ENCODE measurements at regions of chr7 and their contacts with region 1.

Region 1: GRCh38 chr7:32846701-32847100 is 44.9 kb downstream of the KBTBD2 start:
- DNase-seq: peak; percentile 83 to 86 (median 84)
- H3K4me3 ChIP-seq: no peak overlapping the region
- H3K4me3 Mint-ChIP-seq: peak overlapping the region in 4 of 8 donors; percentile 33 to 50 (median 44)
- H3K27ac ChIP-seq: no peak overlapping the region
- H3K27ac Mint-ChIP-seq: peak overlapping the region in 4 of 7 donors; percentile 1 to 65 (median 50)
- H3K4me1 ChIP-seq: no peaks in the 10 kb centered on the region
- H3K4me1 Mint-ChIP-seq: peaks cover 5 to 7% (median 6%) of the 10 kb centered on the region in 4 donors
- H3K27me3 ChIP-seq: no peaks in the 10 kb centered on the region
- H3K27me3 Mint-ChIP-seq: peaks cover 12 to 19% of the 10 kb centered on the region in 2 donors

Region 2: DNA sequence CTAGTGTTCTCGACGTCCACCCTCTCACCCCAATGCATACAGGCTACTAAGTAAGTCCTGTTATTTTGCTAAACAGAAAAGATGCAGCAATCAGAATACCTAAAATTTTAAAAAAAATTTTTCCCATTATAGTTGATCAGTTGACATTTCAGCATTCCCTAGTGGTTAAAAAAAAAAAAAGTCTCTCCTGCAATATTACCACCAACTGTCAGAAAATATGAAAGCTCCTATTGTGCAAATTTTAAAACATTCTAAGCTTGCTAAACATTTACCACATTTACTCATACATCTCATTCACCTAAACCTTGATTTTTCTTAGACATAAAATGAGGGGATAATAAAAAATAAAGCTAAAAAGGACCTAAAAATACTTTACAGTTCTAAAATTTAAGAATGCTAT is 185.8 kb before region 1 on chr7:
- CTCF ChIA-PET with region 1: no interaction called
- POLR2A ChIA-PET with region 1: no interaction called
- intact Hi-C with region 1: no loop called
- DNase-seq: no peak
- H3K4me3 ChIP-seq: no peak overlapping the region
- H3K4me3 Mint-ChIP-seq: no peak overlapping the region
- H3K27ac ChIP-seq: no peak overlapping the region
- H3K27ac Mint-ChIP-seq: no peak overlapping the region
- H3K4me1 ChIP-seq: no peaks in the 10 kb centered on the region
- H3K4me1 Mint-ChIP-seq: no peaks in the 10 kb centered on the region
- H3K27me3 ChIP-seq: no peaks in the 10 kb centered on the region
- H3K27me3 Mint-ChIP-seq: peaks cover 11 to 20% of the 10 kb centered on the region in 2 donors

Region 3: DNA sequence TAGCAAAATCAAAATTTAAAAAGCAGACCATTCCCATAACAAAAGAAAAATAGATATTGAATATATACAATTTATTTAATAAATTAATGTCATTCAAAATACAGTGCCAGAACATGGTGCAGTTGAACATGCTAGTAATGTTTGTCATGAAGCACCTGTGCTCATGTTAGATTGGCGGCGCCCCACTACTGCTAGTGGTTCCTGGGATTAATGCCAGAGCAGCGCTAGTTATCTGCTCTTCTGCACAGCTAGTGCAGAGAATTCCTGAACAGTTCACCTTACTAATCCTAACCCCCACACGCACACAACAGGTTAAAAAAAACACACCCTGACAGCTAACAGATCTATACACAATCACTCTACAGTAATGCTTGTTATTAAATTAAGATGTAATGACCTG is 21.4 kb after region 1 on chr7:
- CTCF ChIA-PET with region 1: interaction called, 25 read pairs
- POLR2A ChIA-PET with region 1: no interaction called
- intact Hi-C with region 1: no loop called
- DNase-seq: no peak
- H3K4me3 ChIP-seq: no peak overlapping the region
- H3K4me3 Mint-ChIP-seq: no peak overlapping the region
- H3K27ac ChIP-seq: no peak overlapping the region
- H3K27ac Mint-ChIP-seq: peak overlapping the region in 1 of 7 donors; percentile 7
- H3K4me1 ChIP-seq: peaks cover 5% of the 10 kb centered on the region
- H3K4me1 Mint-ChIP-seq: peaks cover 15 to 35% (median 17%) of the 10 kb centered on the region in 4 donors
- H3K27me3 ChIP-seq: no peaks in the 10 kb centered on the region
- H3K27me3 Mint-ChIP-seq: no peaks in the 10 kb centered on the region

Region 4: GRCh38 chr7:32905175-32905662 is 58.5 kb after region 1 on chr7:
- CTCF ChIA-PET with region 1: interaction called, 25 read pairs
- POLR2A ChIA-PET with region 1: interaction called, 3 read pairs
- intact Hi-C with region 1: no loop called
- DNase-seq: peak; percentile 81 to 90 (median 87)
- H3K4me3 ChIP-seq: peak overlapping the region in 1 of 2 donors; percentile 46
- H3K4me3 Mint-ChIP-seq: peak overlapping the region; percentile 82 to 91 (median 86)
- H3K27ac ChIP-seq: peak overlapping the region; percentile 44
- H3K27ac Mint-ChIP-seq: peak overlapping the region; percentile 94 to 99 (median 98)
- H3K4me1 ChIP-seq: peaks cover 21% of the 10 kb centered on the region
- H3K4me1 Mint-ChIP-seq: peaks cover 10 to 20% (median 15%) of the 10 kb centered on the region in 4 donors
- H3K27me3 ChIP-seq: no peaks in the 10 kb centered on the region
- H3K27me3 Mint-ChIP-seq: no peaks in the 10 kb centered on the region

Region 5: DNA sequence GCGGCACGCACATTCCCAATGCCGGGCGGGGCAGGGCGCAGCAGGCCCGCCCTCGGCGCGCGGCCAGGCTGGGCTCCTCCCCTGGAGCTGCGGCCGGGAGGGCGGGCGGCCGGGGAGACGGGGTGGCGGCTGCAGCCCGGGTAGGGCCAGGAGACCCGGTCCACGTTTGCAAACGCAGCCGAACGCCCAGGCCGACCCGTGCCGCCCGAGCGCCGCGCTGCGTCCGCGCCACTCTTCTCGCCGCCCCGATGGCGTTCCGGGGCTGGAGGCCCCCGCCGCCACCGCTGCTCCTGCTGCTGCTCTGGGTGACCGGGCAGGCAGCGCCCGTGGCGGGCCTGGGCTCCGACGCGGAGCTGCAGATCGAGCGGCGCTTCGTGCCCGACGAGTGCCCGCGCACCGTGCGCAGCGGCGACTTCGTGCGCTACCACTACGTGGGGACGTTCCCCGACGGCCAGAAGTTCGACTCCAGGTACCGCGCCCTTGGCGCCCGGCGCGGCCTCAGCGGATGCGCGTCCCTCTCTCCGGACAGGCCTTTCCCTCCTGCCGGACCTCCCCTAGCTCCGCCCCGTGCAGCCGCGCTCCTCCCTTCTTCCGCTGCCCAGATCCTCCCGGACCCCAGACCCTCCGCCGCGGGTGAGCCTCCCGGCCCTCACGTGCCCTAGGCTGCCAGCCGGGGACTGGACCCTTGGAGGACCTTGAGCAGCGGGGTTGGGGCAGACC is 110.8 kb after region 1 on chr7 and contains the start of gene FKBP9:
- CTCF ChIA-PET with region 1: interaction called, 10 read pairs
- POLR2A ChIA-PET with region 1: no interaction called
- intact Hi-C with region 1: no loop called
- DNase-seq: peak in 2 of 5 donors; percentile 5 to 12
- H3K4me3 ChIP-seq: peak within 1 kb of the TSS in 1 of 2 donors; percentile 35
- H3K4me3 Mint-ChIP-seq: peak within 1 kb of the TSS; percentile 57 to 90 (median 80)
- H3K27ac ChIP-seq: no peak within 1 kb of the TSS
- H3K27ac Mint-ChIP-seq: no peak within 1 kb of the TSS
- H3K4me1 ChIP-seq: peaks cover 11% of the 10 kb centered on the region
- H3K4me1 Mint-ChIP-seq: peaks cover 3 to 5% (median 4%) of the 10 kb centered on the region in 4 donors
- H3K27me3 ChIP-seq: peaks cover 8% of the 10 kb centered on the region
- H3K27me3 Mint-ChIP-seq: peaks cover 28 to 29% of the 10 kb centered on the region in 2 donors
- total RNA-seq, gene FKBP9: 0.35 TPM in 1 of 2 experiments, not detected in the other

Region 6: GRCh38 chr7:33062782-33063443 is 216.2 kb after region 1 on chr7:
- CTCF ChIA-PET with region 1: interaction called, 15 read pairs
- POLR2A ChIA-PET with region 1: no interaction called
- intact Hi-C with region 1: no loop called
- DNase-seq: peak; percentile 93 to 95 (median 94)
- H3K4me3 ChIP-seq: peak overlapping the region; percentile 75 to 98
- H3K4me3 Mint-ChIP-seq: peak overlapping the region; percentile 95 to 98 (median 96)
- H3K27ac ChIP-seq: peak overlapping the region; percentile 87
- H3K27ac Mint-ChIP-seq: peak overlapping the region; percentile 93 to 99 (median 96)
- H3K4me1 ChIP-seq: peaks cover 40% of the 10 kb centered on the region
- H3K4me1 Mint-ChIP-seq: peaks cover 29 to 48% (median 35%) of the 10 kb centered on the region in 4 donors
- H3K27me3 ChIP-seq: no peaks in the 10 kb centered on the region
- H3K27me3 Mint-ChIP-seq: peaks cover 1 to 2% of the 10 kb centered on the region in 2 donors

Measured in CD4-positive, alpha-beta memory T cell (primary cell).